ENCODE measurements at regions of chr3 and their contacts with region 1.

Region 1: GRCh38 chr3:184341929-184342328 is 4.5 kb downstream of the FAM131A start:
- DNase-seq: peak in 1 of 2 donors; percentile 30
- ATAC-seq: no peak
- H3K4me3 ChIP-seq: no peak overlapping the region
- H3K27ac ChIP-seq: no peak overlapping the region
- H3K4me1 ChIP-seq: peaks cover 42% of the 10 kb centered on the region
- H3K27me3 ChIP-seq: no peaks in the 10 kb centered on the region
- CTCF ChIP-seq: no peak

Region 2: DNA sequence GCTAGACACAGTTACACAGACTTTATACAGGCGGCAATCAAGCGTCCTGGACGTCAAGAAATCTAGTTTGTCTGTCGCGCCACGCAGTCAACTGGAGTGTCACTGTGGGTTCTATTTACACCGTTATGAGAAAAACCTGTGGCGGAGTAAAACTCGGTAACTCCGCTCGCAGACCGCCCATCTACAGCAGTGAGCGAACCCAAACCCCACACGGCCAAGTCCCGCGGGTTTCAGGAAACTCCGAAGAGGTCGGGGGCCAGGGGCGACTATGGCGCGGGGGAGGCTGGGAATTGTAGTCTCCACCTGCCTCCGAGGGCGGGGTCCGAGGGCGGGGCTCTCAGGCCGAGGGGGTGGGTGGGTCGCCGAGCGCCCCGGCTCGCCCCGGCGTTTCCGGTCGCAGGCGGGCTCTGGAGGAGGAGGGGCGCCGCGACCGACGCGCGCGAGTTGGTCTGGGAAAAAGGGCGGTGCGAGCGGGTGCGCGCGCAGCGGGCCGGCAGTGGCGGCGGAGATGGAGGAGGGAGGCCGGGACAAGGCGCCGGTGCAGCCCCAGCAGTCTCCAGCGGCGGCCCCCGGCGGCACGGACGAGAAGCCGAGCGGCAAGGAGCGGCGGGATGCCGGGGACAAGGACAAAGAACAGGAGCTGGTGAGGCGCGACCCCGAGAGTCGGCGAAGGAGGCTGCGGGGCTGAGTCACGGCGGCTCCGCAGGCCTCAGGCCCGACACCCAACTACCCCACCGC is 43.0 kb before region 1 on chr3 and contains the start of gene PSMD2:
- intact Hi-C with region 1: loop called in 1 of 2 experiments (anchors 5 kb)
- DNase-seq: peak; percentile 98 to 99
- ATAC-seq: peak; percentile 98 to 99 (median 99)
- H3K4me3 ChIP-seq: peak within 1 kb of the TSS; percentile 97
- H3K27ac ChIP-seq: peak within 1 kb of the TSS; percentile 84
- H3K4me1 ChIP-seq: peaks cover 25% of the 10 kb centered on the region
- H3K27me3 ChIP-seq: no peaks in the 10 kb centered on the region
- CTCF ChIP-seq: no peak
- total RNA-seq, gene PSMD2: 338 to 440 (median 424) TPM

Measured in psoas muscle (tissue), 8 donors.